OCI-LY7 (cell line): ENCODE measurements at regions of chr6 and their contacts with region 1.

Region 1: DNA sequence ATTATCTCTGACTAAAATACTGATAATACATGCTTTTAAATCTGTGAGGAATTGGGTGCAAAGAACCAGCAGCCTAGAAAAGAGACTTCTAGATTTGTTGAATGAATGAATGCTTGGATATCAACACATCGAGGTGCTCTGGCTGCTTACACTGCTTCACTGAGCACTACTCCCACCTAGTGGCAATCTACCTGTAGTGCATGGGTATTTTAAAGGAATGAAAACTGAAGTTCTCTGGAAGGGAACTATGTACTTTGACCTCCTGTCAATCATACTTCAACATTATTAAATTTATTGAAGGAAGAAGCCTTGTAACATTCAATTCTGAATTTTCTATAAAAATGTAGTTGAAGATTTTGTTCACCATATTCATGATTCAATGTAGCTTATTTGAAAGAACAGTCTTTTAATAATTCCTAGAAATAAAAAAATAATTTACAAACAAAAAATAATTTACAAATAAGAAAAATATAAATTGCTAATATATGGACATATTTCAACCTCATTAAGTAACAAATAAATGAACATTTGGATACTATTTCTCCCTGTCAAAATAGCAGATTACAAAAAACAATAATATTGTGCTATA is 111.2 kb upstream of the MMS22L start:
- DNase-seq: peak; percentile 66
- H3K4me3 ChIP-seq: no peak overlapping the region
- H3K27ac ChIP-seq: no peak overlapping the region
- H3K4me1 ChIP-seq: no peaks in the 10 kb centered on the region
- CTCF ChIP-seq: peak; percentile 96

Region 2: GRCh38 chr6:96626759-96627364 is 767.4 kb before region 1 on chr6:
- CTCF ChIA-PET with region 1: no interaction called
- POLR2A ChIA-PET with region 1: no interaction called
- intact Hi-C with region 1: no loop called
- DNase-seq: peak; percentile 66
- H3K4me3 ChIP-seq: no peak overlapping the region
- H3K27ac ChIP-seq: no peak overlapping the region
- H3K4me1 ChIP-seq: peaks cover 19% of the 10 kb centered on the region
- CTCF ChIP-seq: peak; percentile 83

Region 3: DNA sequence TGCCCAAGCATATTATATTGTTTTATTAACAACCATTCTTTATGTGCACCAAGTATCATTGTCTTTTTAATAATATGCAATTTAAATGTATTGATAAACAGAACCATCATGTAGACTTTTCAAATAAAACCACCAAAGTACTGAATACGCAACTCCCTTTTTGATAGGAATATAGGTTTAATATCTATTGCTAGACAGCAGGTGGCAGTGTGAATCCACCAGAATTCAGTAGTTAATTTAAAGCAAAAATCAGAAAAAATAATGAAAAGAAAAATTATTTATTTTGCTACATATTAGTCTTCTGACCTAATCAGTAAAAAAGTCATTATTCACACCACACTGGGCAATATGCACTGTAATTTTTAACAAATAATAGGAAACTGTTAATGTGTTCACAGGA is 326.0 kb before region 1 on chr6:
- CTCF ChIA-PET with region 1: no interaction called
- POLR2A ChIA-PET with region 1: interaction called, 4 read pairs
- intact Hi-C with region 1: loop called (anchors 1 kb)
- DNase-seq: peak; percentile 43
- H3K4me3 ChIP-seq: no peak overlapping the region
- H3K27ac ChIP-seq: no peak overlapping the region
- H3K4me1 ChIP-seq: no peaks in the 10 kb centered on the region
- CTCF ChIP-seq: peak; percentile 89

Region 4: DNA sequence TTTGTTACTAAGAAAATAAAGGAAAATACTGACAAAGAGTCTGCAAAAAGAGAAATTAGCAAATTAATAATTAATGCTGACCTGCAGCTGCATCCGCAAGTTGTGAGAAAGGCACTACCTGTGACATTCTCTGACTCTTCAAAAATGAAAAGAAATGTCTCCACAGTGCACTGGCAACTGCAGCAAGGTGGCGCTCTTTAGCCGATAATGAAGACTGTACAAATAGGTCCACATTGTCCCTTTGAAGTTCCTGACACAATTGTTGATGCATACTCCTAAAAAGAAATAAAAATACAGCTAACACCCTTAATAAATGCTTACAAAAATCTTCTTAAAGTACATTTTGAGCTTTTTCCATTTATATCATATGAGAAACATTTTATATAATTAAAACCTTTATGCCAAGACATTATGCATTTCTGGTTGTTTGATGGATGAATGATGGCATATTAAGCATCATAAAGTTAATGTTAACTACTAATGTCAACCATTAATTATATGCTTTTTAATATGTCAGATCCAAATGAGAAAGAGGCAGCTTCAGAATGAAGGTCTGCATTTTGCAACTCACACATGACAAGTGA is 207.7 kb before region 1 on chr6:
- CTCF ChIA-PET with region 1: no interaction called
- POLR2A ChIA-PET with region 1: no interaction called
- intact Hi-C with region 1: loop called (anchors 1 kb)
- DNase-seq: peak; percentile 73
- H3K4me3 ChIP-seq: no peak overlapping the region
- H3K27ac ChIP-seq: no peak overlapping the region
- H3K4me1 ChIP-seq: no peaks in the 10 kb centered on the region
- CTCF ChIP-seq: peak; percentile 100